ENCODE measurements at regions of chr1 and their contacts with region 1.

Region 1: DNA sequence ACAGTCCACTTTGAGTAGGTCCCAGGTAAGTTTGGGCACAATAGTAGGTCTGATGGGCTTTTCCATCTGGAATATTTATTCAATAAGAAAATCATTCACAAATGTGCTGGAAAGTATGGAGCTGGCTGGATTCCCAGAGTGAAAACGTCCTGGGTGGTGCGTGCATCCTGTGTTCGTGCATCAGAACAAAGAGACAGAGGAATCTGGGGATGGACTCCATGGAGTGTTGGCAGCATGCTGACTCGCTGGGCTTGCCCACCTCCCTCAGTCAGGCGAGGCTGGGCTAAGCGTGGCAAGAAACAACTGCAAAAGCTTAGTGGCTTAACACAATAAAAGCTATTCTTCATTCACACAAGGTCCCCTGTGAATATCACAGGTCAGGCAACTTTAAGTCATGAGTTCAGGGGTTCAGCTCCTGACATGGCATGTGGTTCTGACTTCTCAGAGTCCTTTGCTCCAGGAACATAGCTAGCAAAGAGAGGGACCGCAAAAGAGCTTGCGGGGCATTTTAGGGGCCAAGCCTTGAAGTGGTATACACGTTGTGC is 151.6 kb upstream of the ZNF644 start:
- DNase-seq: no peak

Region 2: GRCh38 chr1:90579212-90579802 is 594.1 kb before region 1 on chr1:
- intact Hi-C with region 1: loop called in 1 of 2 experiments (anchors 5 kb)
- DNase-seq: no peak

Region 3: GRCh38 chr1:92511541-92511940 is 1338.1 kb after region 1 on chr1:
- intact Hi-C with region 1: no loop called
- DNase-seq: no peak

Measured in posterior vena cava (tissue), 2 donors.